Heart right ventricle (tissue), 16 donors: ENCODE measurements at regions of chr1 and their contacts with region 1.

Region 1: GRCh38 chr1:234722904-234723720 is 113.1 kb upstream of the IRF2BP2 start:
- DNase-seq: peak; percentile 59 to 74
- ATAC-seq: peak; percentile 4 to 32 (median 16)
- H3K4me3 ChIP-seq: peak overlapping the region in 5 of 10 donors; percentile 12 to 35 (median 15)
- H3K27ac ChIP-seq: peak overlapping the region; percentile 91 to 100 (median 98)
- H3K4me1 ChIP-seq: peaks cover 57 to 99% (median 93%) of the 10 kb centered on the region in 9 donors
- H3K27me3 ChIP-seq: no peaks in the 10 kb centered on the region
- CTCF ChIP-seq: no peak

Region 2: GRCh38 chr1:234533975-234534876 is 188.9 kb before region 1 on chr1:
- intact Hi-C with region 1: loop called in 6 of 10 experiments (anchors 2 to 10 kb)
- DNase-seq: peak; percentile 89 to 95
- ATAC-seq: peak in 7 of 8 donors; percentile 6 to 60 (median 30)
- H3K4me3 ChIP-seq: peak overlapping the region in 1 of 10 donors; percentile 1
- H3K27ac ChIP-seq: peak overlapping the region; percentile 94 to 99 (median 98)
- H3K4me1 ChIP-seq: peaks cover 53 to 100% (median 97%) of the 10 kb centered on the region in 9 donors
- H3K27me3 ChIP-seq: no peaks in the 10 kb centered on the region
- CTCF ChIP-seq: no peak

Region 3: GRCh38 chr1:234709473-234710228 is 13.5 kb before region 1 on chr1:
- intact Hi-C with region 1: no loop called
- DNase-seq: peak in 1 of 2 donors; percentile 65
- ATAC-seq: peak; percentile 72 to 93 (median 83)
- H3K4me3 ChIP-seq: no peak overlapping the region
- H3K27ac ChIP-seq: peak overlapping the region; percentile 42 to 82 (median 56)
- H3K4me1 ChIP-seq: peaks cover 0 to 23% (median 11%) of the 10 kb centered on the region in 9 donors
- H3K27me3 ChIP-seq: no peaks in the 10 kb centered on the region
- CTCF ChIP-seq: no peak

Region 4: DNA sequence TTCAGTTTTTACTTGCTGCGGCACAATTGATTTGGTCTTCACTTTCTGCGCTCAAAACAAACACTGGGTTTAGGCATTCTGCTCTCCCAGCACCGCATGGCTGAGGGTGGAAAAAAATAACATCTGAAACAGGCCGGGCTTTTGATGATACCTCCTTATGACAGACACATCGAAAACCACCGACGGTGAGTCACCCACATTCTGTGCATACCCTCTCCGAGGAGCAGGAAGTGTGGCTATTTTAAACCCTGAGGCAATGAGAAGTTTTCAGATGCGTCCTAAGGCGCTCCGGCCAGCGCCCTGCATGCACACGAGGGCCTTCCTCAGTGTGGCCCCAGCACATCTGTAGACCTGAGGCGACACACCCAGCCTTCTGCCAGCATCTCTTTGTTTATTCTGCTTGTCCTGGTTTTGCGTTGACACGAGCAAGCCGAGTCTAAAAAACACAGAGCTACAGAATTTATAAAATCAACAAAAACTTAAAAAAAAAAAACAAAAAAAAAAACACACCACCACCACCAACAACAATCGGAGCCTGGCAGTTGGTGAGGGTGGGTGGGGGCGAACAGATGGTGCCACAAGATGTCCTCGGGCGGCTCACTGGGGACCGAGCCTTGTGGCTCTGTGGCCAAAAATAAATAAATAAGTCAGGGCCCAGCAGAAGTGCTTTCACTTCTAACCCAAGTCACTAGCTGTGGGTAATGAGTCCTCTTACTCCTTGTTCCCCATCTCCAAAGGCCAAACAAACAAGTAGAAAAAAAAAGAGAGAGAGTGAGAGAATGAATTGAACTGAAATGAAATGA is 49.4 kb after region 1 on chr1:
- intact Hi-C with region 1: loop called in 1 of 10 experiments (anchors 5 kb)
- DNase-seq: peak; percentile 52 to 64
- ATAC-seq: peak; percentile 60 to 91 (median 82)
- H3K4me3 ChIP-seq: peak overlapping the region in 1 of 10 donors; percentile 10
- H3K27ac ChIP-seq: peak overlapping the region in 7 of 10 donors; percentile 14 to 89 (median 51)
- H3K4me1 ChIP-seq: peaks cover 2 to 63% (median 14%) of the 10 kb centered on the region in 9 donors
- H3K27me3 ChIP-seq: peaks cover 0 to 13% (median 13%) of the 10 kb centered on the region in 7 donors
- CTCF ChIP-seq: no peak

Region 5: GRCh38 chr1:234862944-234863515 is 139.9 kb after region 1 on chr1:
- intact Hi-C with region 1: loop called in 2 of 10 experiments (anchors 10 kb)
- DNase-seq: peak; percentile 76 to 86
- ATAC-seq: peak; percentile 62 to 85 (median 76)
- H3K4me3 ChIP-seq: peak overlapping the region in 4 of 10 donors; percentile 4 to 17 (median 6)
- H3K27ac ChIP-seq: peak overlapping the region; percentile 60 to 93 (median 82)
- H3K4me1 ChIP-seq: peaks cover 6 to 51% (median 42%) of the 10 kb centered on the region in 9 donors
- H3K27me3 ChIP-seq: no peaks in the 10 kb centered on the region
- CTCF ChIP-seq: no peak

Region 6: GRCh38 chr1:234893725-234894630 is 170.9 kb after region 1 on chr1:
- intact Hi-C with region 1: loop called in 2 of 10 experiments (anchors 5 to 10 kb)
- DNase-seq: peak in 1 of 2 donors; percentile 46
- ATAC-seq: peak in 6 of 8 donors; percentile 3 to 56 (median 37)
- H3K4me3 ChIP-seq: no peak overlapping the region
- H3K27ac ChIP-seq: peak overlapping the region in 8 of 10 donors; percentile 13 to 76 (median 53)
- H3K4me1 ChIP-seq: peaks cover 7 to 63% (median 32%) of the 10 kb centered on the region in 9 donors
- H3K27me3 ChIP-seq: no peaks in the 10 kb centered on the region
- CTCF ChIP-seq: no peak

Region 7: GRCh38 chr1:234978397-234979295 is 255.5 kb after region 1 on chr1:
- intact Hi-C with region 1: loop called in 4 of 10 experiments (anchors 5 to 10 kb)
- DNase-seq: no peak
- ATAC-seq: peak in 7 of 8 donors; percentile 28 to 52 (median 39)
- H3K4me3 ChIP-seq: peak overlapping the region in 2 of 10 donors; percentile 9 to 47
- H3K27ac ChIP-seq: peak overlapping the region; percentile 83 to 98 (median 88)
- H3K4me1 ChIP-seq: peaks cover 15 to 93% (median 54%) of the 10 kb centered on the region in 9 donors
- H3K27me3 ChIP-seq: no peaks in the 10 kb centered on the region
- CTCF ChIP-seq: peak in 3 of 9 donors; percentile 27 to 40 (median 28)

Region 8: GRCh38 chr1:235075188-235075926 is 352.2 kb after region 1 on chr1:
- intact Hi-C with region 1: loop called in 7 of 10 experiments (anchors 1 to 10 kb)
- DNase-seq: peak; percentile 71 to 86
- ATAC-seq: peak; percentile 70 to 85 (median 80)
- H3K4me3 ChIP-seq: peak overlapping the region in 7 of 10 donors; percentile 1 to 31 (median 10)
- H3K27ac ChIP-seq: peak overlapping the region; percentile 85 to 99 (median 96)
- H3K4me1 ChIP-seq: peaks cover 36 to 89% (median 77%) of the 10 kb centered on the region in 9 donors
- H3K27me3 ChIP-seq: no peaks in the 10 kb centered on the region
- CTCF ChIP-seq: no peak